Mammary epithelial cell (primary cell): ENCODE measurements at regions of chr7 and their contacts with region 1.

Region 1: DNA sequence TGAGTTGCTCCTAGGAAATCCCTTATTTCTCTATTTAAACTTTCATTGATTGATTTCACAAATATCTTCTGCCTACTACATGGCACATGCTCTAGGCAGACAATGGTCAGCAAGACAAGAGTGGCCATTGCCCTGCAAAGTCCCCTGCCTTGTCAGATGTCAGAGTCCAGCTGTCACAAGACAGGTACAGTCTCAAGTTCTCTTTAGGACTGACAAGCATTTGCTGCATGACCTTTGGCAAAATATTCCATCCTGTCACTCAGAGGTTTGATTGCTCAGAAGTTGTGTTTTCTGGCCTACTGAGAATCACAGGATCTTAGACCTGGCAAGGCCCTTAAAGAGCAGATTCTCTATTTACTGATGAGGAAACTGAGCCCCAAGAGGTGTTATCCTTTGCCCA is 322.3 kb upstream of the NFE2L3 start:
- DNase-seq: no peak
- H3K4me3 ChIP-seq: no peak overlapping the region
- H3K27ac ChIP-seq: no peak overlapping the region
- H3K4me1 ChIP-seq: no peaks in the 10 kb centered on the region
- H3K27me3 ChIP-seq: peaks cover 3% of the 10 kb centered on the region
- CTCF ChIP-seq: no peak

Region 2: DNA sequence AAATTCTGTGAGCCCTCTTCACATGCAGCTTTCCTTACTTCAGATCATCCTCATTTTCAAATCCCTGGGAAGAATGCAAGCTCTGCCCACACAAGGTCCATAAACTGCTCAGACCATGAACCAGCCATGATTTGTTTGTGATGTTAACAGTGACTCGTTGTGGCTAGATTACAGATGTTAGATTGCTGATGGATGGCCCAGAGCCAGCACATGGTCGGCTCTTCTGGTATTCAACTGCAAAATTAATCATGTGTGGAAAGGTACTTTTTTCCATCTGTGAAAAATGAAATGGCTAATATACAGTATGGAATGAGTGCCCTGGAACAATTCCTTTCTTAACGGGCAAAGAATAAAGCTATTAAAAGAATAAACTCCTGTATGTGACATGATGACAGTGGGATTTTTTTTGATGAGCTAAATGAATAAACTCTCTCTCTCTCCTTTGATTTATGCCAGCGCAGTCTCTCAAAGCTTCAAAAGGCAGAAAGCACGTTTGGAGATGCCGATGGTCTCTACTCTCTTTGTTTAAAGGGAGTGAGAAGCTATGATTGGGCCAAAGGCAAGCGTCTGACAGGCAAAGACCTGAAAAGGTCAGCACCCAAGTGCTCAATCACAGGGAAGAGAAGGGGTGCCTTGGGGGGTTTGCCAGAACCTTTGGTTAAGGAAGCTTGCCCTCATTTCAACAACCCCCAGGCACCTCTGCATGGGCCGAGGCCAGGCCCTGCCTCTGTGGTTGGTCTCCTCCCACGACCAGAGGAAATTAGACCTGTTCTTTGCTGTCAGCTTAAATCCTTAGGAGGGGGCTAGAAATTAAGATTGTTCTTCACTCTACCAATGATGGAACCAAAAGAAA is 121.7 kb before region 1 on chr7:
- CTCF ChIA-PET with region 1: no interaction called
- dilution Hi-C with region 1: loop called (anchors 5 kb)
- in situ Hi-C with region 1: no loop called
- intact Hi-C with region 1: no loop called
- DNase-seq: no peak
- H3K4me3 ChIP-seq: no peak overlapping the region
- H3K27ac ChIP-seq: no peak overlapping the region
- H3K4me1 ChIP-seq: no peaks in the 10 kb centered on the region
- H3K27me3 ChIP-seq: no peaks in the 10 kb centered on the region
- CTCF ChIP-seq: no peak

Region 3: GRCh38 chr7:26052721-26053120 is 223.1 kb after region 1 on chr7:
- CTCF ChIA-PET with region 1: no interaction called
- dilution Hi-C with region 1: no loop called
- in situ Hi-C with region 1: no loop called
- intact Hi-C with region 1: no loop called
- DNase-seq: peak; percentile 82
- H3K4me3 ChIP-seq: no peak overlapping the region
- H3K27ac ChIP-seq: no peak overlapping the region
- H3K4me1 ChIP-seq: peaks cover 11% of the 10 kb centered on the region
- H3K27me3 ChIP-seq: no peaks in the 10 kb centered on the region
- CTCF ChIP-seq: no peak